Naive thymus-derived CD8-positive, alpha-beta T cell (primary cell): ENCODE measurements at regions of chr1 and their contacts with region 1.

Region 1: DNA sequence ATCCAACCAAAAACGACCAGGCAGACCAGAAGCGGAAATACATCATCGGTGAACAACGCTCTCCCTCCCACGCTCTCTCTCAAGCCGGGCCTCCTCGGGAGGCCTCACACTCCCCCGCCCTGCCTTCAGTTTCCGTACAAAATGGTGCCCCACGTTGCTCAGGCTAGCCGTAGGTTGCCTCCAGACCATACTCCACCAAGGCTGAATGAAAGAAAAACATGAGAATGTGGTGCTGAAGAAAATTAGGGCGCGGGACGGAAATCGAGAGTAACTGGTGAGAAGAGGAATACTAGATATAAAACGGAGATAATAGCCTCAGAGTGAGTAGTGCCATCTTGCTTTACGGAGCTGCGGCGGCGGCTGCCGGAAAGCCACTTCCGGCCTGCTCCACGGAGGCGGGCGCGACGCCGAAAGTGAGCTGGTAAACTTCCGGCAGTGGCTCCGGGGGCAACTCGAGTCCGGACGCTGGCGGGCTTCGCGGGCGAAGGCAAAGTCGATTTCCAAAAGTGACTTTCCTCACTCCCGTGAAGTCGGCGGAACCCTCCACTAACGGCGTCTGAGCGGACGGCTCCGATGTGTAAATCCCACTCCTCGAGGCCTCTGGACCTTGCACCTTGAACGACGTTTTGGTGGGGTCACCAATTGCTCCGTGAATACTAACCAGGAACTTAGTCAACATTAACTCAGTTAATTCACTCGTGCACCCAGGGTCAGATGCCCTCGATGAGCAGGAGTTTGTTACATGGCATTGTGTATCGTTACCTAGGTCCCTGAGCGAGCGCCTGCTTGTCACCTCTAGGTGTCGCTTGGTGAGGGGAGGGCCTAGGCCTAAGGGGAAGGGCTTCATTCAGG is at the start of gene SH3BP5L:
- DNase-seq: peak; percentile 83 to 99 (median 90)
- ATAC-seq: peak; percentile 86 to 88
- H3K4me3 Mint-ChIP-seq: peak within 1 kb of the TSS; percentile 91 to 100 (median 98)
- H3K27ac Mint-ChIP-seq: peak within 1 kb of the TSS; percentile 94 to 100 (median 99)
- H3K4me1 Mint-ChIP-seq: peaks cover 30 to 66% (median 57%) of the 10 kb centered on the region in 4 donors
- H3K27me3 Mint-ChIP-seq: no peaks in the 10 kb centered on the region
- polyA plus RNA-seq, gene SH3BP5L: 1.6 to 3.5 (median 2.6) TPM

Region 2: DNA sequence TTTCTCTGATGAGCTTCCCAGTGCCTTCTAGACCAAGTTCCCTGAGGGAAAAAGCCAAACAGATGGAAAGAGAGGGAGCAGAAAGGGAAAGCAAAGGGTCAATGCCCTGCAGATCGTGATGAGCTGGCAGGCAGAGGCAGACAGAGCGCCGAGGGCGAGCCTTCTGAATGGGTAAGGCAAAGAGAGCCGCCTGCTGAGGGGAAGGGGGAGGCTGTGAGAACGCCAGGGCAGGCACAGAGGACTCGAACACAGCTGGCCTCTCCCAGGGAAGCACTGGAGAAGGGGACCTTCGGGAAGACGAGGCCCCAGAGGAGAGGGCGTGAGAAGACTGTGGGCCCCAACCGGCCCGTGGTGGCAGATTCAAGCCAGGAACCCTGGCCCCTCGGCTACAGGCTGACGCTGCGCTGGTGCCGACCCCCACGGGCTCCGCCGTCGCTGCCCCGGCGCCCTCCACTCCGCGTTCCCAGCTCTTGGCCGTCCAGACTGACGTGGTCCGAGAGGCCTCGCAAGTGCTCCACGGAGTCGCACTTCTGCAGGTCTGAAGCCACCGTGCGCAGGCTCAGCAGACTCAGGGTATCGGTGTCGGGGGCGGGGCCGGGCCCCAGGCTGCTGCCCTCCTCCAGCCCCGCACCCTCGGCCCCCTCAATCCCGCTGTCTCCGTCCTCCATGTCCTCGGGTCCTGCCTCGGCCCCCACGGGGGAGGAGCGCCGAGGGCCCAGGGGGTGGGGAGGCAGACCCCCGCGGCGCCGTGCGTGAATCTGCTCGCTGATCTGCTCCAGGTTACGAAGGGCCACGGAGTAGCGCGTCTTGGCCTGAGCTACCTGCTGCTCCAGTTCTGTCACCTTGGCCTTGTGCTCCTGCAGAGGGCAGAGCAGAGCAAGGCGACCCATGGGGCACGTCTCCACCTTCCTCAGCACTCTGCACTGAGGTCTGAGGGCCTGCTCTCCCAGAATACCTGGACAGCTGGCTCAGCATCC is 14.3 kb before region 1 on chr1:
- POLR2A ChIA-PET with region 1: no interaction called
- DNase-seq: no peak
- ATAC-seq: no peak
- H3K4me3 Mint-ChIP-seq: no peak overlapping the region
- H3K27ac Mint-ChIP-seq: peak overlapping the region in 6 of 10 donors; percentile 15 to 72 (median 34)
- H3K4me1 Mint-ChIP-seq: peaks cover 20 to 35% (median 23%) of the 10 kb centered on the region in 4 donors
- H3K27me3 Mint-ChIP-seq: no peaks in the 10 kb centered on the region

Region 3: GRCh38 chr1:248837794-248838356 is 11.7 kb after region 1 on chr1 and contains the start of gene ZNF672:
- POLR2A ChIA-PET with region 1: interaction called, 103 read pairs
- DNase-seq: peak; percentile 88 to 96 (median 92)
- ATAC-seq: peak; percentile 82 to 85
- H3K4me3 Mint-ChIP-seq: peak within 1 kb of the TSS in 2 of 10 donors; percentile 92 to 95
- H3K27ac Mint-ChIP-seq: peak within 1 kb of the TSS in 6 of 10 donors; percentile 94 to 99 (median 98)
- H3K4me1 Mint-ChIP-seq: peaks cover 12 to 32% (median 30%) of the 10 kb centered on the region in 4 donors
- H3K27me3 Mint-ChIP-seq: peaks cover 0 to 7% (median 2%) of the 10 kb centered on the region in 5 donors
- polyA plus RNA-seq, gene ZNF672: 17.9 to 25.6 (median 19.6) TPM

Region 4: DNA sequence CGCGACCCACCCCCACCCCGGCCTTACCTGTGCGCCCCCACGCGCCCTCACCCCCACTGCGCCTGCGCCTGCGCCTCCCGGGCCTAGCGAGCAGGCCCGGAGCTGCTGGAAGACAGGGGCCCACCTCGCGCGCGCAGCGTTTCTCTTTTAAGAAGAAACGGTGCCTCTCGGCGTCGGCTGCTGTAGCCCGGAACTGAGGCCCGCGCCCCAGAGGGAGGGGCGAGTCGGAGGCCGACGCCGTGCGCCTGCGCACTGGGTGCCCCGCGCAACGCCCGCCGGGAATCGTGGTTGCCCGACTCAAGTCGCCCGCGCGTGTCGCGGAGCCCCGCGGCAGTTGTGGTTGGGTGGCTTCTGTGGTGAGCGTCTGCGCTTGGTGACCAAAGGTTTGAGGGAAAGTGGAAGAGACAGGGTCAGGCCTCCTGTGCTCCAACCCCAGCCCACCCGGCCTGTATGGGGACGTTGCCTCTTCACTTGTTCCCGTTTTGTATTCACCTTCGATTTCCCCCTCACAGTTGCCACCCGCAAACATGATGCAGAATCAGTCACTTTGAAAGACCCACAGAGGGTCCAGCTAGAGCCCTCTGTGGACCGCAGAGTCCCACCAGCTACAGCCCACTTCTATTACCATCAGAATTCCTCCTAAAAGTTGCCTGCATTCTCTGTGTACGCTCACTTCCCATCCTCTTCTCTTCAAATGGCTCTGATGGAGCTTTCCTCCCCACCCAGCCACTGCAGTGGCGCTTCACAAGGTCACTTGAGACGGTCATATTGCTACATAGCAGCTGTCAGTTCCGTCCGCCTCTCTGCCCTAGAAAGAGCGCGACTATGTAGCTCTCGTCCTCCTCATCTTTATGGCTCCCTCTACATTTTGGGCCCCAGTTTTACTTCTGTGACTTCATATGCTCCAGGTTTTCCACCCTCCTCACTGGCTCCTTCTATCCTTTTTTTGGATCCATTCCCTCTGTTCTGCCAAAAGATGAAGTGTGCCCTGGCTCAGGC is 33.1 kb after region 1 on chr1 and contains the start of gene ZNF692:
- POLR2A ChIA-PET with region 1: interaction called, 59 read pairs
- DNase-seq: peak; percentile 95 to 99 (median 96)
- ATAC-seq: peak; percentile 79 to 89
- H3K4me3 Mint-ChIP-seq: peak within 1 kb of the TSS; percentile 78 to 97 (median 90)
- H3K27ac Mint-ChIP-seq: peak within 1 kb of the TSS; percentile 88 to 99 (median 96)
- H3K4me1 Mint-ChIP-seq: peaks cover 44 to 64% (median 61%) of the 10 kb centered on the region in 4 donors
- H3K27me3 Mint-ChIP-seq: no peaks in the 10 kb centered on the region
- polyA plus RNA-seq, gene ZNF692: 5.2 to 9.3 (median 5.9) TPM

Region 5: DNA sequence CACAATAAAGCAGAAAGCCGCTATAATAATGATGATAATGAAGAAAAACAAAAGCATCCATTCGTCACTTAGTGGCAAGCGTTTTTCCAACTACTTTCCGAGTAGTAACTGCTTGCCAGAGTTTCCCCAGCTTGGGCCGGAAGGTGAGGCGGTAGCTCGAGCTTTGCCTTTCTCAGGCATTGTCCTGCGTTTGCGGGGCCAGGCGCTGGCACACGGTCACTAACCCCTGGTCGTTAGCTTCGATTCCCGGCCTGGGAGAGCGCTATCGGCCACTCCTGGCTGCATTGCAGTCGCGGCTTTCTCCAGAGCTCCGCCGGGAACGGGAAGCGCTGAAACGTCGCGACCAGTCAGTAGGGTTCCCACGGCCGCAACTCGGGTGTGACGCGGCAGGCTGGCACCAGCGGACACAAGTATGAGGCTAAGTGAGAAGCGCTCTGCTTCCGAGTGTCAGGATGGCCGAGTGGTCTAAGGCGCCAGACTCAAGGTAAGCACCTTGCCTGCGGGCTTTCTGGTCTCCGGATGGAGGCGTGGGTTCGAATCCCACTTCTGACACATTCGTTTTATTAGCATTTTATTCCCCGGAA is 47.4 kb after region 1 on chr1:
- POLR2A ChIA-PET with region 1: interaction called, 18 read pairs
- DNase-seq: peak; percentile 74 to 96 (median 91)
- ATAC-seq: peak; percentile 79
- H3K4me3 Mint-ChIP-seq: peak overlapping the region; percentile 93 to 99 (median 96)
- H3K27ac Mint-ChIP-seq: peak overlapping the region; percentile 96 to 100 (median 98)
- H3K4me1 Mint-ChIP-seq: peaks cover 16 to 26% (median 20%) of the 10 kb centered on the region in 4 donors
- H3K27me3 Mint-ChIP-seq: peaks cover 0 to 13% (median 0%) of the 10 kb centered on the region in 5 donors

Region 6: GRCh38 chr1:248906009-248906752 is 80.0 kb after region 1 on chr1 and contains the start of gene PGBD2:
- POLR2A ChIA-PET with region 1: interaction called, 11 read pairs
- DNase-seq: peak; percentile 89 to 97 (median 95)
- ATAC-seq: peak; percentile 82 to 84
- H3K4me3 Mint-ChIP-seq: peak within 1 kb of the TSS; percentile 88 to 99 (median 98)
- H3K27ac Mint-ChIP-seq: peak within 1 kb of the TSS; percentile 90 to 100 (median 98)
- H3K4me1 Mint-ChIP-seq: peaks cover 22 to 49% (median 43%) of the 10 kb centered on the region in 4 donors
- H3K27me3 Mint-ChIP-seq: no peaks in the 10 kb centered on the region
- polyA plus RNA-seq, gene PGBD2: 5.3 to 9.9 (median 6.5) TPM